ENCODE measurements at regions of chr1 and their contacts with region 1.

Region 1: GRCh38 chr1:24727501-24728216 is 17.6 kb upstream of the CLIC4 start:
- DNase-seq: peak; percentile 71
- ATAC-seq: peak; percentile 98
- H3K4me3 ChIP-seq: peak overlapping the region; percentile 23; the same call in 1 of the 2 replicates
- H3K27ac ChIP-seq: peak overlapping the region; percentile 52
- H3K4me1 ChIP-seq: peaks cover 23% of the 10 kb centered on the region
- H3K27me3 ChIP-seq: no peaks in the 10 kb centered on the region
- CTCF ChIP-seq: no peak
- EP300 ChIP-seq: no peak
- POLR2A ChIP-seq: no peak
- RAD21 ChIP-seq: no peak

Region 2: GRCh38 chr1:24714859-24715520 is 12.7 kb before region 1 on chr1:
- CTCF ChIA-PET with region 1: interaction called, 8 read pairs
- POLR2A ChIA-PET with region 1: interaction called, 12 read pairs
- RAD21 ChIA-PET with region 1: interaction called, 3 read pairs
- SMC1A ChIA-PET with region 1: interaction called, 5 read pairs
- in situ Hi-C with region 1: no loop called
- intact Hi-C with region 1: no loop called
- DNase-seq: no peak
- ATAC-seq: no peak
- H3K4me3 ChIP-seq: no peak overlapping the region
- H3K27ac ChIP-seq: no peak overlapping the region
- H3K4me1 ChIP-seq: no peaks in the 10 kb centered on the region; the same call in 1 of the 2 replicates
- H3K27me3 ChIP-seq: no peaks in the 10 kb centered on the region
- CTCF ChIP-seq: no peak
- EP300 ChIP-seq: no peak
- POLR2A ChIP-seq: no peak
- RAD21 ChIP-seq: no peak

Region 3: DNA sequence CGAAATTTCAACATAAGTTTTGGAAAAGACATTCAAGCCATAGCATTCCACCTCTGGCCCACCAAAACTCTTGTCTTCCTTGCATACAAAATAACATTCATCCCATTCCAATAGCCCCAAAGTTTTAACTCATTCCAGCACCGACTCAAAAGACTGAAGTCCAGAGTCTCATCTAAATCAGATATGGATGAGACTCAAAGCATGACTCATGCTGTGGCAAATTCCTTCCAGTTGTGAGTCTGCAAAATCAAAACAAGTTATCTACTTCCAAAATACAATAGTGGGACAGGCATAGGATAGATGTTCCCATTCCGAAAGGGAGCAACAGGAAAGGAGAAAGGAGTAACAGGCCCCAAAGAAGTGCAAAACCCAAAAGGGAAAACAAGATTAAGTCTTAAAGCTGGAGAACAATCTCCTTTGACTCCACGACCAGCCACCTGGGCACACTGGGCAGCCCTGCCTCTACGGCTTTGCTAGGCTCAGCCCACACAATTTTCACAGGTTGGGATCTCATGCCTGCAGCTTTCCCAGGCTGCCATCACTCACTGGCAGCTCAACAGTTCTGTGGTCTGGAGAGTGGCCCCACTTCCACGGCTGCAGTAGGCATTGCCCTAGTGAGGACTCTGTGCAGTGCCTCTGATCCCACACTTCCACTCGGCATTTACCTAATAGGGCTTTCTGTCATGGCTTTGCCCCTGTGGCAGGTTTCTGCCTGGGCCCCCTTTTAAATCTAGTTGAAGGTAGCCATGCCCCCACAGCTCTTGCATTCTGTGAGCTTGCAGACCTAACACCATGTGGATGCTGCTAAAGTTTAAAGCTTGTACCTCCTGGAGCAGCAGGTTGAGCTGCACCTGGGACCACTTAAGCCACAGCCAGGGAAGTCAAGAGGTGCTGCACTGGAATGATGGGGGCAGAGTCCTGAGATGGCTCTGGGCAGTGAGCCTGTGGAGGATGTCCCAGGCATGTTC is 151.4 kb after region 1 on chr1:
- CTCF ChIA-PET with region 1: no interaction called
- POLR2A ChIA-PET with region 1: no interaction called
- RAD21 ChIA-PET with region 1: no interaction called
- SMC1A ChIA-PET with region 1: no interaction called
- in situ Hi-C with region 1: no loop called
- intact Hi-C with region 1: no loop called
- DNase-seq: no peak
- ATAC-seq: no peak
- H3K4me3 ChIP-seq: no peak overlapping the region
- H3K27ac ChIP-seq: no peak overlapping the region
- H3K4me1 ChIP-seq: no peaks in the 10 kb centered on the region
- H3K27me3 ChIP-seq: no peaks in the 10 kb centered on the region; a peak in 3 of 4 replicates
- CTCF ChIP-seq: no peak
- EP300 ChIP-seq: no peak
- POLR2A ChIP-seq: no peak
- RAD21 ChIP-seq: no peak

Measured in GM12878 (cell line).